AG04450 (cell line): ENCODE measurements at regions of chr1 and their contacts with region 1.

Region 1: DNA sequence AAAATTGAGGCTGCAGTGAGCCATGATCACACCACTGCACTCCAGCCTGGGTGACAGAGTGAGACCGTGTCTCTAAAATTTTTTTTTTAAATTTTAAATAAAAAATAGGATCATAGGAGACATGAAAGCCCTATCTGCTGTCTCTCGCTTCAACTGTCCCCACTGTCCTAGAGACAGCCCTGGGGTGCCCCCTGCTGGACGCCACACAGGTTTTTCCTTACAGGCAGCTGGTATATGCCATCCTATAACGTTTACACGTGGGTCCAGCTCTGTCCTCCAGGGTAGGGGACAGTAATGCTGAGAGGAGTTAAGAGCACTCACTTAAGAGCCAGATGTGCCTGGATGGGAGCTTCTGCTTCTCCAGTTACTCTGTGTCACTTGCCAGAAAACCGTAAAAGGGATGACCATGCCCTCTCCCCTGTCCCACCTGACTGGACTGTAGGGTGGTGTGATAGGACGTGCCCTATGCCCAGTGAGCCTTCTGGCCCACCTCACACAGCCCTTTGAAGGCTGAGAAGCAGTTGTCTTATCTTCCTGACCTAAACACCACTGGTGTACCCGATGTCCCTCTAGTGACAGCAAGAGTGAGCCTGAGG is 8.5 kb downstream of the FBXO2 start:
- DNase-seq: peak; percentile 23
- H3K4me3 ChIP-seq: no peak overlapping the region
- H3K27ac ChIP-seq: no peak overlapping the region
- H3K27me3 ChIP-seq: peaks cover 25% of the 10 kb centered on the region
- CTCF ChIP-seq: peak; percentile 80

Region 2: DNA sequence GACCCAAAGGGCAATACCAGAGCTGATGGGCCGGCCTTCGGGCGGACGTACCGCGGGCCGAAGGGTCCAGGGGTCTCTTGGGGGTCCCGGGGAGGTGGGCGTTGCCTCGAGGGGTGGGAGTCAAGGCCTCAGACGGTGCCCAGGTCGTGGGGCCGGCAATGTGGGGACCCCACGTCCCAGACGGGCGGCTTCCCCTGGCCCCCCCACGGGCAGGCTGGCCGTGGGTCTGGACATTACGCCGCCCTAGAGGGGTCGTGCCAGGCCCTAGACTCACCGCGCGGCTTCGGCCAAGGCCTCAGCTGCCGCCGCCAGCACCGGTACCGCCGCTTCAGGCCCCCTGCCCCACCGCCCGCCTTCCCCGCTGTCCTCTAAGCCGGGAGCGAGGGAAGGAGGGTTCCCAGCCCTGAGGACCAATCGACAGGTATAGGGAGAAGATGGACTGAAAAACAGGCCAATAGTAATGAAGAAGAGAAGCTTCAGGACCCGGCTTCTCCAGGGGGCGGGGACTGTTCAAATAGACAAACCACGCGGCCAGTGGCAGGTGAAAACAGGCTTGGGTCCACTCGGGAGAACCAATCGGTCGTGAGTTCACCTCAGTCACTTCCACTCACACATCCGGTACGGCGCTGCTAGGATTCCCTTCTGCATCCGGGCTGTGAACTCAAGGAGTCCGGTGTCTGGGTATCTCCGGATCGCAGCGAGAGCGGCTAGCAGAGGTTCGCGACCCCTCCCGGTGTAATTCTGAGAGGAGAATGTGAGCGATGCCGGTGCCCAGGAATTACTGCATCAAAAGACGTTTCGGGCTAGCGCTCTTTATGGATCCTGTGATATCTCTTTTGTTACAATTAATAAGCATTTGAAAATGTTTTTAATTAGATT is 383.4 kb before region 1 on chr1 and contains the start of gene MTOR:
- CTCF ChIA-PET with region 1: interaction called, 16 read pairs
- POLR2A ChIA-PET with region 1: interaction called, 3 read pairs
- DNase-seq: peak; percentile 100
- H3K4me3 ChIP-seq: peak within 1 kb of the TSS; percentile 88
- H3K27ac ChIP-seq: peak within 1 kb of the TSS; percentile 70
- H3K27me3 ChIP-seq: no peaks in the 10 kb centered on the region
- CTCF ChIP-seq: peak; percentile 24
- polyA plus RNA-seq, gene MTOR: 27.7 and 30.7 TPM in 2 replicates

Region 3: DNA sequence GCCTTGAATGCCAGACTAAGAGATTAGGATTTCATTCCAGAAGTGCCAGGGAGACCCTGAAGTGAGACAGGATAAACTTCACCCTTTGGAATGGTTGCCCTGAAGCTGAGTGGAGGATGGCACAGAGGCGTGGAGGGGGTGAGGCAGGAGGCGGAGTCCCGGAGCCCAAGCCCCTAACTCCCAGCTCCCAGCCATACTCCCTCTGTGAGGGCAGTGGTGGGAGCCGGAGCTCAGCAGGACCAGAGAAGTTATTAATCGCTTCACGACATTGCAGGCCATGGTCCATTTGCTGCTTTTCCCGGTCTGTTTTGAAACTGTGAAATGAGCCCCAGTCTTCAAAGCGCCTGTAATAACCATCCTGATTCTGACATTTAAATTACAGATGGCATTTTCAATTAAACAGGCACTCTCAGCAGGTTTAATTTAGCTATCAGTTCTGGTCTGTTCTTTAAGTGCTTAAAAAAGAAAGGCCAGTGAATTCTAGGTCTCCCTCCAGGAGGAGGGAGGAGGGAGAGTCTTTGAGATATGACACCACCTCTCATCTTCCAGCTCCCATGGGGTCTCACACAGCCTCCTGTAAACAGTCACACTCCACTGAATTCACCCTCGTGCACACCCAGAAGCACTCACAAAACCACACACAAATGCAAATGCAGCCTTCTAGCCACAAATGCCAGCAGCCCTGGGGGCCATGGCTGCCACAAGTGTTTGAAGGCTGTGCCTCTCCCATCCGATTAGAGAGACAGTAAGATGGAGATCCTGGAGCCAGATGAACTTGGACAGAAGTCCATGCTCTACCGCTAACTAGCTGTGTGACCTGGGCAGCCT is 11.2 kb before region 1 on chr1:
- CTCF ChIA-PET with region 1: interaction called, 28 read pairs
- POLR2A ChIA-PET with region 1: no interaction called
- DNase-seq: no peak
- H3K4me3 ChIP-seq: no peak overlapping the region
- H3K27ac ChIP-seq: no peak overlapping the region
- H3K27me3 ChIP-seq: peaks cover 8% of the 10 kb centered on the region
- CTCF ChIP-seq: no peak

Region 4: GRCh38 chr1:11719313-11720032 is 73.7 kb after region 1 on chr1:
- CTCF ChIA-PET with region 1: interaction called, 31 read pairs
- POLR2A ChIA-PET with region 1: no interaction called
- DNase-seq: no peak
- H3K4me3 ChIP-seq: peak overlapping the region; percentile 41; the same call in 1 of the 2 replicates
- H3K27ac ChIP-seq: no peak overlapping the region
- H3K27me3 ChIP-seq: peaks cover 20% of the 10 kb centered on the region
- CTCF ChIP-seq: peak; percentile 99

Region 5: DNA sequence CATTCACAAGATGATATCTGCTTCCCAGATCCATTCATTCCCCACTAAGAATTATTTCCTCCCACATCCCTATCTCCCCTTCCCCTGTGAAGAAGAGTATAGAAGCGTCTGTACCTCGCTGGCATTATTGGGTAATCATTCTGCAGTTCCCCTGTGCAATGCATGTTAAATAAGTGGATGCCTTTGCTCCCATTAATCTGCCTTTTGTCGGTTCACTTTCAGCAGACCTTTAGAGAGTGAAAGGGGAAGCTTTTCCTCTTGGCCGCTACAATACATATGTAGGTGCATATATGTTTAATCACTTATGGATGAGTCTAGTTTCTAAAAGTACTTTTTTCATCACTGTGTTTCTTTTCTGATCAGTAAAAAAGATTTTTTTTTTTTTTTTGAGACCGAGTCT is 167.3 kb after region 1 on chr1:
- CTCF ChIA-PET with region 1: no interaction called
- POLR2A ChIA-PET with region 1: no interaction called
- DNase-seq: no peak
- H3K4me3 ChIP-seq: no peak overlapping the region
- H3K27ac ChIP-seq: no peak overlapping the region
- H3K27me3 ChIP-seq: no peaks in the 10 kb centered on the region
- CTCF ChIP-seq: no peak